Activated B cell treated with CpG ODN at 0.5 μM for 24 hours (primary cell): ENCODE measurements at regions of chr2 and their contacts with region 1.

Region 1: GRCh38 chr2:147910990-147911473 is 66.2 kb downstream of the ACVR2A start:
- DNase-seq: no peak
- ATAC-seq: no peak
- H3K4me3 Mint-ChIP-seq: no peak overlapping the region
- H3K27ac Mint-ChIP-seq: no peak overlapping the region
- H3K4me1 Mint-ChIP-seq: no peaks in the 10 kb centered on the region
- H3K27me3 Mint-ChIP-seq: no peaks in the 10 kb centered on the region
- CTCF ChIP-seq: peak; percentile 51

Region 2: GRCh38 chr2:146734042-146734820 is 1176.8 kb before region 1 on chr2:
- CTCF ChIA-PET with region 1: interaction called, 11 read pairs
- POLR2A ChIA-PET with region 1: no interaction called
- intact Hi-C with region 1: loop called (anchors 1 kb)
- DNase-seq: no peak
- ATAC-seq: no peak
- H3K4me3 Mint-ChIP-seq: no peak overlapping the region
- H3K27ac Mint-ChIP-seq: no peak overlapping the region
- H3K4me1 Mint-ChIP-seq: no peaks in the 10 kb centered on the region
- H3K27me3 Mint-ChIP-seq: no peaks in the 10 kb centered on the region
- CTCF ChIP-seq: no peak

Region 3: DNA sequence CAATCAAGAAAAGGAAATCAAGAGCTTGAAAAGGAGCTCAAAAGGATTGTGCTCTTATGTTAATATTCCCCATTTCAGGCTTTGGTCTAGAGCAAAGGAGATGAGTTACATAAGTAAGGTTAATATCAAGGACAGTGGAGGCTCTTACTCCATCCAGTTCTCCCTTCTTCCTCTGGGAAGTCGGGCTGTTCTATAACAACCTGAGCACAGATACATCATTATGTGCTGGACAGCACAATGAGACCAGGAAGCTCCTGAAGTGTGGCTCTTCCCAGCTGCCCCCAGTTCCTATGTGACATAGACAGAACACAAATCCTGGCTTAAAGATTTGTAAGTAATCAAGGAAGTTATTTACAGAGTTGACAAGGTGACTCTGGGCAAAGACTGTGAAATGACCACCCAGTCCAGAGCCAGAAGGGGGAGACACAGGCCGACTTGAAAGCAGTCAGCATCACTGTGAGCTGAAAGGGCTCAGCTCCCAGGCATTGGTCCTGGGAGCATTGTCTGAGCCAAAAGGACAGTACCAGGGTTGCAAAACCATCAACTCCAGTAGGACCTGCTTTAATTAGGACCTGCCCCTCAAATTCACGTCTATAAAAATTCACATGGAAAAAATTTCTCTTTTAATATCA is 983.8 kb before region 1 on chr2:
- CTCF ChIA-PET with region 1: no interaction called
- POLR2A ChIA-PET with region 1: no interaction called
- intact Hi-C with region 1: loop called (anchors 5 kb)
- DNase-seq: no peak
- ATAC-seq: no peak
- H3K4me3 Mint-ChIP-seq: no peak overlapping the region
- H3K27ac Mint-ChIP-seq: no peak overlapping the region
- H3K4me1 Mint-ChIP-seq: no peaks in the 10 kb centered on the region
- H3K27me3 Mint-ChIP-seq: no peaks in the 10 kb centered on the region
- CTCF ChIP-seq: no peak

Region 4: DNA sequence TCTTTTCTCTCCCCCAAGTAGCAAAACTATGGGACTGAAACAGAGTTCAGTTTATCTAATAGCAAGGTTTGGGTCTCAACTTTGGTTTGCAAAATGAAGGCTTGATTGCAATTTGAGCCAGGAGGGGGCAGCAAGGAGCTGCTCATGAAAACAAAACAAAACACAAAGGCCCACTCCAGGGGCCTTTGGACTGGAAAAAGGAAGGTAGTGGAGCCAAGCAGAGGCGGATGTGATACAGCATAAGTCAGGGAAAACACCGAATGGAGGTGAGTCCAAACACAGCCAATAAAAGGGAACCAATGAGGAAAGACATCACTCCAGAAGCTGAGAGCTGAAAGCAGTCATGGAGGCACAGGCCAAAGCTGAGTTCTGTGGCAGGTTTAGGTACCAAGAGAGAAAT is 865.9 kb before region 1 on chr2:
- CTCF ChIA-PET with region 1: interaction called, 81 read pairs
- POLR2A ChIA-PET with region 1: no interaction called
- intact Hi-C with region 1: loop called (anchors 1 kb)
- DNase-seq: no peak
- ATAC-seq: no peak
- H3K4me3 Mint-ChIP-seq: no peak overlapping the region
- H3K27ac Mint-ChIP-seq: no peak overlapping the region
- H3K4me1 Mint-ChIP-seq: no peaks in the 10 kb centered on the region
- H3K27me3 Mint-ChIP-seq: no peaks in the 10 kb centered on the region
- CTCF ChIP-seq: no peak

Region 5: GRCh38 chr2:147082850-147083522 is 828.0 kb before region 1 on chr2:
- CTCF ChIA-PET with region 1: interaction called, 120 read pairs
- POLR2A ChIA-PET with region 1: no interaction called
- intact Hi-C with region 1: loop called (anchors 1 kb)
- DNase-seq: no peak
- ATAC-seq: peak; percentile 37
- H3K4me3 Mint-ChIP-seq: no peak overlapping the region
- H3K27ac Mint-ChIP-seq: no peak overlapping the region
- H3K4me1 Mint-ChIP-seq: no peaks in the 10 kb centered on the region
- H3K27me3 Mint-ChIP-seq: no peaks in the 10 kb centered on the region
- CTCF ChIP-seq: no peak

Region 6: GRCh38 chr2:147288131-147288530 is 622.9 kb before region 1 on chr2:
- CTCF ChIA-PET with region 1: no interaction called
- POLR2A ChIA-PET with region 1: no interaction called
- intact Hi-C with region 1: loop called (anchors 2 kb)
- DNase-seq: no peak
- ATAC-seq: no peak
- H3K4me3 Mint-ChIP-seq: no peak overlapping the region
- H3K27ac Mint-ChIP-seq: no peak overlapping the region
- H3K4me1 Mint-ChIP-seq: no peaks in the 10 kb centered on the region
- H3K27me3 Mint-ChIP-seq: no peaks in the 10 kb centered on the region
- CTCF ChIP-seq: no peak

Region 7: GRCh38 chr2:147977679-147978078 is 66.6 kb after region 1 on chr2:
- CTCF ChIA-PET with region 1: no interaction called
- POLR2A ChIA-PET with region 1: no interaction called
- intact Hi-C with region 1: no loop called
- DNase-seq: no peak
- ATAC-seq: no peak
- H3K4me3 Mint-ChIP-seq: no peak overlapping the region
- H3K27ac Mint-ChIP-seq: no peak overlapping the region
- H3K4me1 Mint-ChIP-seq: peaks cover 18% of the 10 kb centered on the region
- H3K27me3 Mint-ChIP-seq: no peaks in the 10 kb centered on the region
- CTCF ChIP-seq: no peak